Right ventricle myocardium inferior (tissue), 1 donor: ENCODE measurements at regions of chr5 and their contacts with region 1.

Region 1: GRCh38 chr5:134140530-134141201 is 26.2 kb downstream of the TCF7 start:
- DNase-seq: no peak
- ATAC-seq: peak; percentile 66

Region 2: DNA sequence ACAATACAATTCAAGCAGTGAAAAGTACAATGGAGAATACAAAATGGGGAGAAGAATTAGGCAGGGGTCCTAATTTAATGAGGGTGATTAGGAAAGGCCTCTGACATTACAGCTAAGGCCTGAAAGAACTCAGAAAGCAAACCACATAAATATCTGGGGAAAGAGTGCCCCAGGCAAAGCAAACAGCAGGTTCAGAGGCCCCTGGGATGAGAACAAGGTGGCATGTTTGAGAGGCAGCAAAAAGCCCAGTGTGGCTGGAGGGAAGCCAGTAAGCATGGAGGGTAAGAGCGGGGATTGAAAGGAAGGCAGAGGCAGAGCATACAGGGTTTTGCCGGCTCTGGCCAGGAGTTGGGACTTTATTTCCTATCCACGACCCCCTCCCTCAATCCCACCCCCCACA is 102.5 kb before region 1 on chr5:
- intact Hi-C with region 1: loop called (anchors 2 kb)
- DNase-seq: no peak
- ATAC-seq: no peak

Region 3: DNA sequence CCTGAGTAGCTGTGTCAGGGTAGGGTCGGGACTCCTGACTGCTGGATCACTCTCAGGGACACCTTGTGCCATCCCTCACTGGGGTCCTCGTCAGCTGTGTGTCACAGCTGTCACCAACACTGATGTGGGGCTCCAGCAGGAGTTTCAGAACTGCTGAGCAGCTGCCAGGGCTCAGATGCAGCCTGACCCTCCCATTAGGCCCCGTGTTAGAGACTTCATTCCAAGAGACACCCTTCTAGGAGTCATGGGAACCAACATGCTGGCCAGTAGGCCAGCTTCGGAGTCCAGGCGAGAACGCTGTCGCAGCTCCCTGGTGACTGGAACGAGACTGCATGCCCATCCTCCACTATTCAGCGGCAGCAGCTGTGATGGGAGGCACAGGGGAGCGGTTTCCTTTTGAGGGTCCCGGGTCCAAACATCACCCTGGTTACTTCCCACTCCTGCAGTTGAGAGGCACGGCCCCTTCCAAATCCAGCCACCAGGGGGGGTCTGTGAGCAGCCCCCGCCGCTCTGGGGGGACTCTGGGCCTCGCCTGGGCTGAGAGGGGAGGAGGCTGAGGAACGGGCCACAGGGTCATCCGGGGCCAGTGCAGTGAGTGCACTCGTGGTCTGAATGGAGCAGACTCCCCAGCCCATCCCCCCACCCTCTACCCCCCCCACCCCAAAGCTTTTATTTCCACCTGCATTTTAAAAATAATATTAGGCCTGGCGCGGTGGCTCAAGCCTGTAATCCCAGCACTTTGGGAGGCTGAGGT is 38.8 kb before region 1 on chr5:
- intact Hi-C with region 1: loop called (anchors 1 kb)
- DNase-seq: no peak
- ATAC-seq: peak; percentile 77